Calu3 (cell line): ENCODE measurements at regions of chr7 and their contacts with region 1.

Region 1: DNA sequence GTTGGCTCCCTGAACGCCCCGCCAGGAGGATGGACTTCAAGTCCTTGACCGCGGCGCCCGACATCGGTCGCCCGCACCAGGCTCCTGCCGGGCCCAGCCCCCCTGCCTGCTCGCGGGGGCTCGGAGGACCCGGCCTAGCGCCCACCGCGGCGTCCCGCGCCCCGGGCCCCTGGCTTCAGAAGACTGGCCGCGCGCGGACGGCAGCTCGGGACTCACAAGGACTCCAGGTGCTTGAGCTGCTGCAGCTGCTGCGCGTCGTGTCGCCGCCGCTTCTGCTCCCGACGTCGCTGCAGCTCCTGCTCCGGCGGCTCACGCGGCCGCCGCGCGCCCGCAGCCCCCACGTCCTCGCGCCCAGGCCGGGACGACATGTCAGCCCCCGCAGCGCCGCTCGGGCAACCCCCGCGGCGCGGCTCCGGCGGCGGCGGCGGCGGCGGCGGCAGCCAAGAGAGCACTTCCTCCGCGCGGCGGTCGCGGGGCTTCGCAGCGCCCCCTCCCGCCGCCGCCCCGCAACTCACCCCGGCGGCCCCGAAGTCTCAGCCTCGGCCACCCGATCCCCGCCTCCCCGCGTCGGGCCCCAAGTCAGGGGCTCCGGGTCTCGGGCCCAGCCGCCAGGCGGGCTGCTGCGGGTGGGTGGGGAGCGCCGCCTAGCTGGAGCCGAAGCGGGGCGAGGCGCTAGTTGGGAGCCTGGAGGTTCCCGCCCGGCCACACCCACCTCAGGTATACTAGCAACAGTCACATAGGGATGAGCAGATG is at the start of gene RP9:
- DNase-seq: peak; percentile 93
- H3K4me3 Mint-ChIP-seq: peak within 1 kb of the TSS; percentile 88
- H3K27ac Mint-ChIP-seq: peak within 1 kb of the TSS; percentile 43
- H3K4me1 Mint-ChIP-seq: peaks cover 14% of the 10 kb centered on the region
- H3K27me3 Mint-ChIP-seq: peaks cover 39% of the 10 kb centered on the region
- CTCF ChIP-seq: peak; percentile 65
- total RNA-seq, gene RP9: 30.9 and 37.2 TPM in 2 replicates

Region 2: DNA sequence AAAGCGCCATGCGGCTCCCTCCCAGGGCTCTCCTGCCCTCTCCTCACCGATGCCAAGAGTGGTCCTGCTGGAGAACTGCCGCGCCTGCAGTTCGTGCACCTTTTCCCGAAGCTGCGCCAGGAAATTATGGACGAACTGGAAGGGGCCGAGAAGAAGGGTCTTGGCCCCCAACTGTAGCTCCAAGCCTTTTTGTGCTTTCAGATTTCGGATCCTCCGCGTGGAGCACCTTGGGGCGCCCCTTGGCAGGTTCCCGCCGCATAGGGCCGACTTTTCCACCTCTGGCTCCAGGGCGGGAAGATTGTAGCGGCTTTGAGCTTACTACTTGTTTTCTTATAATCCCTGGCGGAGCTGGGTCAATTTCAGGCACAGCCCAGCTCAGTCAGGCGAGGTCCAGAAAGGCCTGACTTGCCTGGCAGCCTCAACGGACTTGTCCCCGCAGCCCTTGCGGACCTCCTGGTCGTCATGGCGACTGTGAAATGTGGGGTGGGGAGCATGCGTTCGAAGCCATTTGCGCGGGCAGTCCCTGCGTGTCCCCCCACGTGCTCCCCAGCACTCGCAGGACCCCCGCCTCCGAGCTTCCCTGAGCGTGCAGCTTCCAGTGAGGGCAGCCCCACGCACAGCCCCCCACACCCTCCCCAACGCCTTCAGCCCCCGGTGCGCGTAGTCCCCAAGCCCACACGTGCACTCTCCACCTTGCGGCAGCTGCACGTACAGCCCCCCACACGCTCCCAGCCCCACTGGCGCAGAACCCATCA is 347.6 kb before region 1 on chr7:
- CTCF ChIA-PET with region 1: interaction called, 3 read pairs
- intact Hi-C with region 1: loop called (anchors 2 kb)
- DNase-seq: no peak
- H3K4me3 Mint-ChIP-seq: no peak overlapping the region
- H3K27ac Mint-ChIP-seq: no peak overlapping the region
- H3K4me1 Mint-ChIP-seq: no peaks in the 10 kb centered on the region
- H3K27me3 Mint-ChIP-seq: no peaks in the 10 kb centered on the region
- CTCF ChIP-seq: no peak

Region 3: DNA sequence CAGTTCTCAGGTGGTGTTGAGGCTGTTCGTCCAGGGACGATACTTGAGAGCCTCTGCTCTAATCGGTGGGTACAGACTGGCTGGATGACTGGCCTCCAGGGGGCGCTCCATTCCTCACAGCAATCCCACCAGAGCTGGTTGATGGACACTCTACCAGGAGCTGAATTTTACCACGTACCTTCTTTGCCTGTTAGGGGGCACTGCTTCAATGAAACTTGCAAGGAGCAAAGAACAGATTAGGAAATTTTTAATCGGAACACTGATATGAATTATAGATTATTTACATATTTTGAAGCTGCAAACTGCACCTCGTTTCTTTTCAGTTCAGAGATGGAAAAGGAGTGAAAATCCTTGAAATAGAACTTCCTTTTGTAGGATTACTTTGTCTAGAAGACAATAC is 262.5 kb before region 1 on chr7:
- CTCF ChIA-PET with region 1: interaction called, 21 read pairs
- intact Hi-C with region 1: loop called (anchors 5 kb)
- DNase-seq: peak; percentile 96
- H3K4me3 Mint-ChIP-seq: no peak overlapping the region
- H3K27ac Mint-ChIP-seq: no peak overlapping the region
- H3K4me1 Mint-ChIP-seq: no peaks in the 10 kb centered on the region
- H3K27me3 Mint-ChIP-seq: no peaks in the 10 kb centered on the region
- CTCF ChIP-seq: peak; percentile 98

Region 4: DNA sequence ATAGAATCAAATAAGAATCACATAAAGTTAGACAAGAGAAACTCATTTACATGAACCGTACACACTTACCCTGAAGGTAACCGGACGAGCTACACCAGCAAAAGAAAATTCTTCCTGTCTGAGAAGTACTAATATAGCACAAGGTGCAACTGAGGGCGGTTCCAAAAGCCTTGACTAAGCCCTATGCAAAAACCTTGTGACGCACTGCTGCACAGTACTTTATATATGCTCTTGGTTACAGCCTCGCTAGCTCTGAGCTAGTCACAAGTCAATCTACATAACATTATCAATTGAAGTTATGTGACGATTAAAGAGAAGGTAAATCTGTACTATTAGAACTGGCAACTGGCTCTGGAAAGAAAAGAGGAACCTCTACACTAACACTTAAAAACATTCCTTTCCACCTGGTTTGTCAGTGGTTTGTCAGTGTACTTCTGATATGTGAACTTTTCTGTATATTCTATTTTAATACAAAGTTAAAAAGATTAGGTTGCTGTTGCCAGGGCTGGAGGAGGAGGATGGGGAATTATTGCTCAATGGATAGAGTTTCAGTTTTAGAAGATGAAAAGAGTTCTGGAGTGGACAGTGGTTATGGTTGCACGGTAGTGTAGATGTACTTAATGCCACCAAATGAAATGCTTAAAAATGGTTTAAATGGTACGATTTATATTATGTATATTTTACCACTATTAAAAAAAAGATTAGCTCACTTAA is 68.2 kb before region 1 on chr7:
- CTCF ChIA-PET with region 1: interaction called, 8 read pairs
- intact Hi-C with region 1: loop called (anchors 5 kb)
- DNase-seq: peak; percentile 77
- H3K4me3 Mint-ChIP-seq: peak overlapping the region; percentile 67
- H3K27ac Mint-ChIP-seq: peak overlapping the region; percentile 79
- H3K4me1 Mint-ChIP-seq: peaks cover 53% of the 10 kb centered on the region
- H3K27me3 Mint-ChIP-seq: no peaks in the 10 kb centered on the region
- CTCF ChIP-seq: no peak

Region 5: GRCh38 chr7:33054261-33054964 is 54.8 kb before region 1 on chr7:
- CTCF ChIA-PET with region 1: no interaction called
- intact Hi-C with region 1: no loop called
- DNase-seq: no peak
- H3K4me3 Mint-ChIP-seq: no peak overlapping the region
- H3K27ac Mint-ChIP-seq: no peak overlapping the region
- H3K4me1 Mint-ChIP-seq: peaks cover 32% of the 10 kb centered on the region
- H3K27me3 Mint-ChIP-seq: no peaks in the 10 kb centered on the region
- CTCF ChIP-seq: no peak

Region 6: DNA sequence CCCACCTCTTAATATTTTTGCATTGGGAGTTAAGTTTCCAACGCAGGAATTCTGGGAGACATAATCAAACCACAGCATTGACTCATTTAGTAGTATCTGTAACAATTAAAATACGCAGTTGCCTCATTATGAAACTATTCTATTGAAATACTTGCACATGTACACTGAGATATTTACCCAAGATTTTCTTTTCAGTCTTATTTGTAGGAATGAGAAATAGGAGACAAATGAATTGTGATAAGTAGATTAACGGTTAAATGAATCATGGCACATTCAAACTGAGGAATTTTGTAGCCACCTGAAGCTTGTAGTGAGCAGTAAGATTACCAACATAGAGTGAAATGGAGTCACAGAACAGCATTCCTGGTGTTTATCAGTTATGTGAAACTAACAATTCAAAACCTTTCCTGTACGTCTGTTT is 18.1 kb before region 1 on chr7:
- CTCF ChIA-PET with region 1: no interaction called
- intact Hi-C with region 1: no loop called
- DNase-seq: no peak
- H3K4me3 Mint-ChIP-seq: no peak overlapping the region
- H3K27ac Mint-ChIP-seq: no peak overlapping the region
- H3K4me1 Mint-ChIP-seq: no peaks in the 10 kb centered on the region
- H3K27me3 Mint-ChIP-seq: no peaks in the 10 kb centered on the region
- CTCF ChIP-seq: no peak